ENCODE measurements at regions of chr2 and their contacts with region 1.

Region 1: DNA sequence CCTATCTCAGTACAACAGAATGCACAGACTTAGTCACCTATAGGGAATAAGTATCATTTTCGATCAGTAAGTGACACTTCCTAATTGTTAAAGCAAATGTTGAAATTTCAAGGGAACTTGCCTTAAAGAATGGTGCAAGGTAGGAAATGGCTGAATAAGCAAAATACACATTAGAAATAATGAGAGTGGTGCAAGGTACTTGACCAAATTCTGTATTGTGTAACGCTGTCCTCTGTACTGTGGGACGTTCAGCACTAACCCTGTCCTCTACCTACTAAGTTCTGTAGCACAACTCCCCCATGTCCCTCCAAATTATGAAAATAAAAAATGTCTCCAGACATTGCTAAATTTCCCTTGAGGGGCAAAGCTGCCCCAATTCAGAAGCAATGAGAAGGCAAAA is 19.4 kb downstream of the MMADHC start:
- DNase-seq: no peak
- H3K4me3 ChIP-seq: no peak overlapping the region
- H3K4me1 ChIP-seq: no peaks in the 10 kb centered on the region
- H3K27me3 ChIP-seq: no peaks in the 10 kb centered on the region

Region 2: DNA sequence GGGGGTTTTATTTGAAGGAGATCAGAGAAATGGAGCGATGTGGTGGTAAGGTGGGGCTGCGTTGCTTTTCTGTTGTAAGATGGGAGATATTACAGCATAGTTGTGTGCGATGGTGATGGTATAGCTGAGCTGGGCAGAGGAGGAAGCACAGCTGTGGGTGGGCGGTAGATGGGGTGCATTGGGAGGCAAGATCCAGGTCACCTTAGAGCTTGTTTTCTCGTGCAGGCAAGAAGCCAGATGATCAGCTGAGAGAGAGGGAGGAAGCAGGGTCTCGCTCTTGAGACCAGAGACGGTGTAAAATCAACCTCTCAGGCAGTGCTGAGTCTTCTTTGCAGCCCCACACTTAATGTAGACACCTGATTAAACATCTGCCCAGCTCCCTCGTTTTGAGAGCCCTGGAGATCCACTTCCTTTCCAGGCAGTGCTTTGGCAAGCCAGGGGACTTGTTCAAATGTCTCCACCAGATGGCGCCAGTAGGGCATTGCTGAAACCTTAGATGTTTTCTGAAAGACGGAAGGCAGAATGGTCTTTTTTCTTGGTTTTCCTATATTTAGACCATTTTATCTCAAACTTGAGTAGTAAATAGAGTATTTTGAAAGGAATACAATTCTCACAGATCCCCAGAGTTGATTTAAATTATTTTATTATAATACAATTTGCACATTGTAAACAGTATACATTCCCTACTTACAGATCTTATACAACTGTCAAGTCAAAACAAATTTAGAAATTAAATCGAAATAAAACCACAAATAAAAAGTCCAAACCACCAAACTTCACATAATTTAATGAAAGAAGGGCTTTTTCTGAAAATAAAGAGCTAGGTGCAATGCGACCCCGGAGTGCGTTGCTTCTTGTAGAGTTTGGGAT is 550.8 kb before region 1 on chr2:
- in situ Hi-C with region 1: loop called (anchors 5 kb)
- DNase-seq: peak; percentile 56 to 88
- H3K4me3 ChIP-seq: no peak overlapping the region
- H3K4me1 ChIP-seq: peaks cover 3% of the 10 kb centered on the region
- H3K27me3 ChIP-seq: no peaks in the 10 kb centered on the region